Activated CD8-positive, alpha-beta T cell treated with anti-CD3 and anti-CD28 coated beads for 36 hours (primary cell): ENCODE measurements at regions of chr12 and their contacts with region 1.

Region 1: GRCh38 chr12:47651368-47652254 is 54.2 kb downstream of the RPAP3 start:
- DNase-seq: peak; percentile 62
- ATAC-seq: peak; percentile 98
- H3K4me3 Mint-ChIP-seq: no peak overlapping the region
- H3K27ac Mint-ChIP-seq: no peak overlapping the region
- H3K4me1 Mint-ChIP-seq: peaks cover 12% of the 10 kb centered on the region
- H3K27me3 Mint-ChIP-seq: no peaks in the 10 kb centered on the region
- CTCF ChIP-seq: peak; percentile 81

Region 2: DNA sequence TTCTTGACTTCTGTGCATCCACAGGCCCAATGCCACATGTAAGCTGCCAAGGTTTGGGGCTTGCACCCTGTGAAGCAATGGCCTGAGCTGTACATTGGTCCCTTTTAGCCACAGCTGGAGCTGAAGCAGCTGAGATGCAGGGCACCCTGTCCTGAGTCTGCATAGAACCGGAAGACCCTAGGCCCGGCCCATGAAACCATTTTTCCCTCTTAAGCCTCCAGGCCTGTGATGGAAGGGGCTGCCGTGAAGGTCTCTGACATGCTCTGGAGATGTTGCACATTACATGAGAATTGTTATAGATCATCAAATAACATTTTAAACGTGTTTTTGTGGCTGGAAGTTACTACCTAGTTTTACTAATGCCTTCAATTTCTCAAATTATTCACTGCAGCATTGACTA is 134.5 kb before region 1 on chr12:
- CTCF ChIA-PET with region 1: no interaction called
- POLR2A ChIA-PET with region 1: no interaction called
- intact Hi-C with region 1: no loop called
- DNase-seq: no peak
- ATAC-seq: no peak
- H3K4me3 Mint-ChIP-seq: no peak overlapping the region
- H3K27ac Mint-ChIP-seq: no peak overlapping the region
- H3K4me1 Mint-ChIP-seq: no peaks in the 10 kb centered on the region
- H3K27me3 Mint-ChIP-seq: no peaks in the 10 kb centered on the region
- CTCF ChIP-seq: no peak

Region 3: GRCh38 chr12:47672068-47672467 is 20.5 kb after region 1 on chr12:
- CTCF ChIA-PET with region 1: interaction called, 21 read pairs
- POLR2A ChIA-PET with region 1: no interaction called
- intact Hi-C with region 1: no loop called
- DNase-seq: no peak
- ATAC-seq: no peak
- H3K4me3 Mint-ChIP-seq: no peak overlapping the region
- H3K27ac Mint-ChIP-seq: no peak overlapping the region
- H3K4me1 Mint-ChIP-seq: peaks cover 22% of the 10 kb centered on the region
- H3K27me3 Mint-ChIP-seq: no peaks in the 10 kb centered on the region
- CTCF ChIP-seq: no peak

Region 4: DNA sequence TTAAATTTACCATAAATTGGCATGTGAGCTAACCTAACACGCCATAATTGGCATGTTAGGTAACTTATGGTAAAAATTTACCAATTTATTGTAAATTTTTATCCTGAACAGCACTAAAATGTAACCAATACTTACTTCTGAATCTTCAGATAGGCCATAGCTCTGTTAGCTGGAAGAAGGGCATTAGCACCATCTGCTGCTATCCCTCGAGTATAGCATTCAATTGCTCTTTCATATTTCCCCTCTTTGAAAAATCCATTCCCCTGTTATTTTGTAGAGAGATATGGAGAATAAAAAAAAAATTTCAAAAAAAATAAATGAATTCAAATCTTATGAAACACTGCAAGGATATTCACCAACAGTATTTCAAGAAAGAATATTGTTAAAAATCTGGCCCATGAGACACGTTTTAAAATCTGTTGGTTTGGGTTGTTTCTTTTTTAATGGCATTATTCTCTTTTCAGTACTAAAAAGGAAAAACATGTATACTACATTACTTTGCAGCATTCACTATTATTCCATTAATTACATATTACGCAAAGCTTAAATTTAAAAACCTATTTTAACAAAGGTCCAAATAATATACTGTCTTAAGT is 35.1 kb after region 1 on chr12:
- CTCF ChIA-PET with region 1: interaction called, 34 read pairs
- POLR2A ChIA-PET with region 1: interaction called, 3 read pairs
- intact Hi-C with region 1: no loop called
- DNase-seq: peak; percentile 27
- ATAC-seq: peak; percentile 73
- H3K4me3 Mint-ChIP-seq: no peak overlapping the region
- H3K27ac Mint-ChIP-seq: no peak overlapping the region
- H3K4me1 Mint-ChIP-seq: peaks cover 5% of the 10 kb centered on the region
- H3K27me3 Mint-ChIP-seq: no peaks in the 10 kb centered on the region
- CTCF ChIP-seq: peak; percentile 73

Region 5: DNA sequence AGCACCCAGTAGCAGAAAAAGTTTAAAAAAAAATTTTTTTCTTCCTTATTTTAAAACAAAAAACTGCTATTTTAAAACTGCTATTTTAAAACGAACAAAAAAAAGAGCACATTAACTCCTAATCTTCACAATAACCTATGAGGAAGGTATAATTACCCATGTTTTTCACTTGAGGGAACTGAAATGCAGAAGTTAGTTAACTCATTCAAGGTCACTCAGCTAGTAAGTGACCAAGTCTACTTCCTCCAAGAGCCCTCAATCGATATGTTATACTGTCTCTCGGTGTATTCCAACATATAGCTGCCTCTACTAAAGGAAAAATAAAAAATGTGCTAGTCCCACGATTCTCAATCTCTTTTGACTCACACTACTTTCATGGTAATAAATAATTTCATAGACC is 46.4 kb after region 1 on chr12:
- CTCF ChIA-PET with region 1: interaction called, 10 read pairs
- POLR2A ChIA-PET with region 1: no interaction called
- intact Hi-C with region 1: no loop called
- DNase-seq: no peak
- ATAC-seq: no peak
- H3K4me3 Mint-ChIP-seq: no peak overlapping the region
- H3K27ac Mint-ChIP-seq: no peak overlapping the region
- H3K4me1 Mint-ChIP-seq: peaks cover 8% of the 10 kb centered on the region
- H3K27me3 Mint-ChIP-seq: no peaks in the 10 kb centered on the region
- CTCF ChIP-seq: no peak